Endothelial cell of umbilical vein (primary cell): ENCODE measurements at regions of chr12 and their contacts with region 1.

Region 1: GRCh38 chr12:118183705-118184104 is 47.8 kb downstream of the PEBP1 start:
- DNase-seq: peak; percentile 63
- H3K4me3 ChIP-seq: no peak overlapping the region
- H3K27ac ChIP-seq: peak overlapping the region; percentile 25
- H3K4me1 ChIP-seq: peaks cover 33% of the 10 kb centered on the region
- H3K27me3 ChIP-seq: no peaks in the 10 kb centered on the region
- CTCF ChIP-seq: no peak
- POLR2A ChIP-seq: no peak

Region 2: DNA sequence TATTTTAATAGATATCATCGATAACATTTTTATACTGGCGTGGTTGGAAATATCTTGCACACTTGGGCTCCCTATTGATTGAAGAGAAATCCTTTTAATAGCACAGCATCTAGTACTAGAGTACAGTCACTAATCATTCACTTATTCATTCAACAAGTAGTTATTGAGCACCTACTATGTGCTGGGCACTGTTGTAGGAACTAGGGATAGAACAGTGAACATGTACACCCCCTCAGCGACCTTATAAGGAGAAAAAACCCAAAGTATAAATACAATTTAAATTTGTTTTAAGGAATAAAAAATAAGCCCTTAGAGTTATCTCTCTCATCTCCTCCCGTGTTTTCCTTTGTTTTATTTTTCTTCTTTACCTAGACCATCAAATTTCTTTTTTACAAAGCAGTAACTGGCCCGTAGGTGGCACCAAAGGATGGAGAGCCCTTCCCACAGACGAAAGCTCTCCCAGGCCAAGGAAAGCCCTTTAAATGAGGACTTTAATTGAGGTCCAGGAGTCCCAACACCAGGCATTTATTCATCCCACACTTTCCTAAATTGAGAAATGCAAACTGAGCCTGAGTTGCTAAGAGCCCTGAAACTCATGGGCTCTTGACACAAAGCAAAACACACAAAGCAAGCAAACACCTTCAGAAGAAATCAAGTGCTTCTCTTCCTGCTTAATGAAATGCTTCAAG is 18.8 kb before region 1 on chr12:
- CTCF ChIA-PET with region 1: interaction called, 15 read pairs
- POLR2A ChIA-PET with region 1: no interaction called
- dilution Hi-C with region 1: no loop called
- intact Hi-C with region 1: no loop called
- DNase-seq: peak; percentile 53
- H3K4me3 ChIP-seq: no peak overlapping the region
- H3K27ac ChIP-seq: no peak overlapping the region
- H3K4me1 ChIP-seq: no peaks in the 10 kb centered on the region
- H3K27me3 ChIP-seq: no peaks in the 10 kb centered on the region
- CTCF ChIP-seq: peak; percentile 52 to 58
- POLR2A ChIP-seq: no peak

Region 3: DNA sequence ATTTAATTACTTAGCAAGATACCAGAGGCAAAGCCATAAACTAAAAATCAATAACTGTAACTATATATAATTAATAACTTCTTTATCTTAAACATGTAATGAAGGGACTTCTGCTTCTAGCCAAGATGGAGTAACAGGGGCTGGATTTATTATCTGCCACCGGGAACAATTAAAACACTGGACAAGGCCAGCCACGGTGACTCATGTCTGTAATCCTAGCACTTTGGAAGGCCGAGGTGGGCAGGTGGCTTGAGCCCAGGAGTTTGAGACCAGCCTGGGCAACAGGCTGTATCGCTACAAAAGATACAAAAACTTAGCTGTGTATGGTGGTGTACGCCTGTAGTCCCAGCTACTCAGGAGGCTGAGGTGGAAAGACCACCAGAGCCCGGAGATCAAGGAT is 75.4 kb after region 1 on chr12:
- CTCF ChIA-PET with region 1: no interaction called
- POLR2A ChIA-PET with region 1: no interaction called
- dilution Hi-C with region 1: no loop called
- intact Hi-C with region 1: loop called (anchors 5 kb)
- DNase-seq: no peak
- H3K4me3 ChIP-seq: no peak overlapping the region
- H3K27ac ChIP-seq: no peak overlapping the region
- H3K4me1 ChIP-seq: no peaks in the 10 kb centered on the region
- H3K27me3 ChIP-seq: no peaks in the 10 kb centered on the region
- CTCF ChIP-seq: no peak
- POLR2A ChIP-seq: no peak

Region 4: GRCh38 chr12:118307069-118307954 is 123.6 kb after region 1 on chr12:
- CTCF ChIA-PET with region 1: interaction called, 3 read pairs
- POLR2A ChIA-PET with region 1: no interaction called
- dilution Hi-C with region 1: no loop called
- intact Hi-C with region 1: loop called (anchors 1 kb)
- DNase-seq: peak; percentile 63
- H3K4me3 ChIP-seq: peak overlapping the region in 2 of 3 experiments; percentile 33 to 40
- H3K27ac ChIP-seq: peak overlapping the region; percentile 88
- H3K4me1 ChIP-seq: peaks cover 22% of the 10 kb centered on the region
- H3K27me3 ChIP-seq: no peaks in the 10 kb centered on the region
- CTCF ChIP-seq: no peak
- POLR2A ChIP-seq: no peak